ENCODE measurements at regions of chr10 and their contacts with region 1.

Region 1: GRCh38 chr10:119680050-119680449 is 28.9 kb downstream of the BAG3 start:
- DNase-seq: peak; percentile 99
- H3K4me3 Mint-ChIP-seq: peak overlapping the region; percentile 72
- H3K27ac Mint-ChIP-seq: peak overlapping the region; percentile 92
- H3K4me1 Mint-ChIP-seq: peaks cover 28% of the 10 kb centered on the region
- H3K27me3 Mint-ChIP-seq: no peaks in the 10 kb centered on the region
- CTCF ChIP-seq: no peak

Region 2: GRCh38 chr10:119543814-119544642 is 136.0 kb before region 1 on chr10:
- CTCF ChIA-PET with region 1: no interaction called
- POLR2A ChIA-PET with region 1: no interaction called
- intact Hi-C with region 1: no loop called
- DNase-seq: no peak
- H3K4me3 Mint-ChIP-seq: peak overlapping the region; percentile 77
- H3K27ac Mint-ChIP-seq: peak overlapping the region; percentile 62
- H3K4me1 Mint-ChIP-seq: peaks cover 28% of the 10 kb centered on the region
- H3K27me3 Mint-ChIP-seq: no peaks in the 10 kb centered on the region
- CTCF ChIP-seq: no peak

Region 3: GRCh38 chr10:119596537-119597404 is 83.3 kb before region 1 on chr10 and contains the start of gene TIAL1:
- CTCF ChIA-PET with region 1: interaction called, 5 read pairs
- POLR2A ChIA-PET with region 1: interaction called, 50 read pairs
- intact Hi-C with region 1: no loop called
- DNase-seq: peak; percentile 99
- H3K4me3 Mint-ChIP-seq: peak within 1 kb of the TSS; percentile 77
- H3K27ac Mint-ChIP-seq: peak within 1 kb of the TSS; percentile 87
- H3K4me1 Mint-ChIP-seq: peaks cover 22% of the 10 kb centered on the region
- H3K27me3 Mint-ChIP-seq: no peaks in the 10 kb centered on the region
- CTCF ChIP-seq: no peak
- total RNA-seq, gene TIAL1: 117 and 149 TPM in 2 replicates

Region 4: GRCh38 chr10:119650692-119651513 is 29.1 kb before region 1 on chr10 and contains the start of gene BAG3:
- CTCF ChIA-PET with region 1: interaction called, 7 read pairs
- POLR2A ChIA-PET with region 1: interaction called, 752 read pairs
- intact Hi-C with region 1: loop called (anchors 1 kb)
- DNase-seq: peak; percentile 96
- H3K4me3 Mint-ChIP-seq: peak within 1 kb of the TSS; percentile 94
- H3K27ac Mint-ChIP-seq: peak within 1 kb of the TSS; percentile 94
- H3K4me1 Mint-ChIP-seq: peaks cover 26% of the 10 kb centered on the region
- H3K27me3 Mint-ChIP-seq: no peaks in the 10 kb centered on the region
- CTCF ChIP-seq: no peak
- total RNA-seq, gene BAG3: 53.7 and 55.2 TPM in 2 replicates

Region 5: GRCh38 chr10:119725828-119726675 is 46.0 kb after region 1 on chr10 and contains the start of gene INPP5F:
- CTCF ChIA-PET with region 1: interaction called, 5 read pairs
- POLR2A ChIA-PET with region 1: interaction called, 116 read pairs
- intact Hi-C with region 1: no loop called
- DNase-seq: peak; percentile 98
- H3K4me3 Mint-ChIP-seq: peak within 1 kb of the TSS; percentile 82
- H3K27ac Mint-ChIP-seq: peak within 1 kb of the TSS; percentile 76
- H3K4me1 Mint-ChIP-seq: peaks cover 45% of the 10 kb centered on the region
- H3K27me3 Mint-ChIP-seq: no peaks in the 10 kb centered on the region
- CTCF ChIP-seq: peak; percentile 5
- total RNA-seq, gene INPP5F: 10.3 and 14.9 TPM in 2 replicates

Region 6: DNA sequence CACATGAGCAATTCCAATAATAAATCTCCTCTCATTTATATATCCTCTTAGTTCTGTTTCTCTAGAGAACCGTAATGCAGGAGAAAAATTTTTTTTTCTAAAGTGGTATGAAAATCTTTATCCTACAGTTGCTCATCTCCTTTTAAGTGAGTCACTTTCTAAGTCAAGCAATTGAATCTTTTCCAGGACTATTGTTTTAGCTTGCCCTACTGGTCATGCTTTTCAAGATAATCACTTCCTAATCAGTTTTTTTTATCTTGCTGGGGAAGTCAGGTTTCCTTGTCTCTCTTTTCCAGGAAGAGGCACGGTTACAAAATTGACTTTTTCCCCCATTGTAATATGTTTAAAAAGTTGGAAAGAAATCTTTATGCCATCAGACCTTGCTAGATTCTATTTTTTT is 89.8 kb after region 1 on chr10:
- CTCF ChIA-PET with region 1: no interaction called
- POLR2A ChIA-PET with region 1: interaction called, 14 read pairs
- intact Hi-C with region 1: no loop called
- DNase-seq: peak; percentile 61
- H3K4me3 Mint-ChIP-seq: no peak overlapping the region
- H3K27ac Mint-ChIP-seq: peak overlapping the region; percentile 46
- H3K4me1 Mint-ChIP-seq: peaks cover 28% of the 10 kb centered on the region
- H3K27me3 Mint-ChIP-seq: no peaks in the 10 kb centered on the region
- CTCF ChIP-seq: no peak

Region 7: DNA sequence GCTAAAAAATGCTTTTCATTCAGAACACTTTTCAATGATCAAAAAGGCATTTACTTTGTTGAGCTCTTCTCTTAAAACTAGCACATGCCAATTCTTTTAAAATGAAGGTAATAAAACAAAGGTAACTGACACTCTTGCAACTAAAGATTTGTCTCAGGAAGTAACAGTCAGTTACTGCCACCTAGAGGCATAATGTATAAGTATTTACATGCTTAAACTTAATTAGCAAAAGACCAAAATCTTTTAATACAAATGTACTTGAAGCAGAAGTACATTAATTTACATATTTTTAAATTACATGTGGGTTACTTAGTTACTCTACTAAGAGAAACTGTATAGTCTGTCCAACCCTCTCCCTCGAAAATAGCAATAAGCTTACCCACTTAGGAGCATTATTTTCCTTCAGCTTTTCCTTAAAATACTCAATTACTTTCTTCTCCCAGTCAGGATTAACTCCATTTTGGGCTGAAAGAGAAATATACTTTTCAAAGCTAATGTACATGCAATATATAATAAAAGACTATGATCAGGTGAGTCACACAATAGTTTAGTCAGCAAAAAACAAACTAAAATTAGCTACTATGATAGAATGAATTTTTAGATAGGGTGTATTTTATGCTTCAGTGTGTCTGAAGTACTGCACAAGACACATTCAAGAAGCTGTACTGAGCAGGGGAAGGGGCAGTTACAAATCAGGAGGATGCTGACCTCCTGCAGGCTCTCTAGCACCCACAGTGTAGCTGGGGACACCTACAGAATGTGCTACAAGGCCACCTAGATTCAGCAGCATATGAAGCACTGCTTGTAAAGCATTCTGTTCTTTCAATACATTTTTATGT is 179.6 kb after region 1 on chr10:
- CTCF ChIA-PET with region 1: interaction called, 16 read pairs
- POLR2A ChIA-PET with region 1: interaction called, 12 read pairs
- intact Hi-C with region 1: no loop called
- DNase-seq: peak; percentile 63
- H3K4me3 Mint-ChIP-seq: no peak overlapping the region
- H3K27ac Mint-ChIP-seq: peak overlapping the region; percentile 35
- H3K4me1 Mint-ChIP-seq: peaks cover 23% of the 10 kb centered on the region
- H3K27me3 Mint-ChIP-seq: no peaks in the 10 kb centered on the region
- CTCF ChIP-seq: peak; percentile 38

Region 8: DNA sequence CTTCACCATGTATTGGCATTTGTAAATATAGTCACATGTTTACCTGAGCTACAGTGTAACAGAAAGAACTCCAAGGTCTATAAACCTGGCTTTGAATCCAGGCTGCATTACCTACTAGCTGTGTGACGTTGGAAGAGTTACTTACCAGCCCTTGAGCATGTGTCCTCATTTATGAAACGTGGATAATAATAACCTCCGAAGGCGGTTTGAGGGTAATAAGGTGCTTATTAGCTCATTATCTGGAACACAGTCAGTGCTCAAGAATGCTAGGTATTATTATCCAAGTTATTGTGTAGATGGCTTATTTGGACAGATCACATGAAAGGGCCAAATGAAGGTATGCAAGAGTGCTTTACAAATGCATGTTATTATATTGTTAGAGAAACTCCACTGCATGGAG is 277.4 kb after region 1 on chr10:
- CTCF ChIA-PET with region 1: no interaction called
- POLR2A ChIA-PET with region 1: no interaction called
- intact Hi-C with region 1: no loop called
- DNase-seq: no peak
- H3K4me3 Mint-ChIP-seq: no peak overlapping the region
- H3K27ac Mint-ChIP-seq: no peak overlapping the region
- H3K4me1 Mint-ChIP-seq: no peaks in the 10 kb centered on the region
- H3K27me3 Mint-ChIP-seq: no peaks in the 10 kb centered on the region
- CTCF ChIP-seq: no peak

Region 9: GRCh38 chr10:120735773-120736371 is 1055.8 kb after region 1 on chr10:
- CTCF ChIA-PET with region 1: no interaction called
- POLR2A ChIA-PET with region 1: no interaction called
- intact Hi-C with region 1: no loop called
- DNase-seq: peak; percentile 37
- H3K4me3 Mint-ChIP-seq: no peak overlapping the region
- H3K27ac Mint-ChIP-seq: no peak overlapping the region
- H3K4me1 Mint-ChIP-seq: peaks cover 13% of the 10 kb centered on the region
- H3K27me3 Mint-ChIP-seq: peaks cover 45% of the 10 kb centered on the region
- CTCF ChIP-seq: peak; percentile 60